ENCODE measurements at regions of chr6 and their contacts with region 1.

Region 1: GRCh38 chr6:125790358-125791150 is at the start of gene NCOA7:
- DNase-seq: peak; percentile 87 to 92 (median 89)
- ATAC-seq: peak; percentile 79 to 96 (median 93)
- H3K4me3 ChIP-seq: peak within 1 kb of the TSS; percentile 50 to 98 (median 82)
- H3K27ac ChIP-seq: peak within 1 kb of the TSS; percentile 87 to 98 (median 96)
- H3K4me1 ChIP-seq: peaks cover 0 to 52% (median 22%) of the 10 kb centered on the region in 12 donors
- H3K27me3 ChIP-seq: no peaks in the 10 kb centered on the region
- CTCF ChIP-seq: peak in 4 of 12 donors; percentile 4 to 32 (median 16)
- POLR2A ChIP-seq: peak; percentile 25 to 75
- total RNA-seq, gene NCOA7: 6.4 to 23.1 (median 9.9) TPM

Region 2: GRCh38 chr6:125835221-125835744 is 44.7 kb after region 1 on chr6:
- intact Hi-C with region 1: loop called in 3 of 10 experiments (anchors 5 kb)
- DNase-seq: peak in 1 of 5 donors; percentile 38
- ATAC-seq: peak; percentile 25 to 84 (median 78)
- H3K4me3 ChIP-seq: no peak overlapping the region
- H3K27ac ChIP-seq: peak overlapping the region in 11 of 12 donors; percentile 12 to 83 (median 66)
- H3K4me1 ChIP-seq: peaks cover 0 to 70% (median 25%) of the 10 kb centered on the region in 12 donors
- H3K27me3 ChIP-seq: no peaks in the 10 kb centered on the region
- CTCF ChIP-seq: no peak
- POLR2A ChIP-seq: no peak

Region 3: DNA sequence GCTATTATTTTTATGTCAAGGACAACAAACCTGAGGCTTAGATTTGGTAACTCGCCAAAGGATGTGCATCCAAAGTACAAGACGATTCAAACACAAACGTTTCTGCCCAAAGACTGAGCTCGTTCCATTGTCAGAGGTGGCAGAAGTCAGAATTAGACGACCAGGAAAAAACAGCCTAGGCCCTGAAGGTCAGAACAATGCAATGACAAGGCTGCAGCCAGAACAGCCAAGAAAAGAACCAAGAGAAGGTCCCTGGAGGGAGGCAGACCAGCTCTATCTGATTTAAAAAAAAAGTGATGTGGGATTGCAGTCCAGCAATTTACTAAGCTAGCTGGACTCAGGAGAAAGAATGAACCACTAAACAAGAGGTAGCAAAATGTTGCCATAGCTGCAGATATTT is 54.4 kb after region 1 on chr6:
- intact Hi-C with region 1: loop called in 7 of 10 experiments (anchors 5 to 10 kb)
- DNase-seq: peak in 4 of 5 donors; percentile 43 to 52 (median 48)
- ATAC-seq: peak; percentile 73 to 92 (median 88)
- H3K4me3 ChIP-seq: no peak overlapping the region
- H3K27ac ChIP-seq: peak overlapping the region in 11 of 12 donors; percentile 16 to 69 (median 40)
- H3K4me1 ChIP-seq: peaks cover 0 to 41% (median 25%) of the 10 kb centered on the region in 12 donors
- H3K27me3 ChIP-seq: no peaks in the 10 kb centered on the region
- CTCF ChIP-seq: no peak
- POLR2A ChIP-seq: no peak

Region 4: GRCh38 chr6:125858427-125859320 is 68.1 kb after region 1 on chr6:
- intact Hi-C with region 1: loop called in 5 of 10 experiments (anchors 5 to 10 kb)
- DNase-seq: peak in 4 of 5 donors; percentile 29 to 53 (median 38)
- ATAC-seq: peak; percentile 69 to 90 (median 86)
- H3K4me3 ChIP-seq: no peak overlapping the region
- H3K27ac ChIP-seq: no peak overlapping the region
- H3K4me1 ChIP-seq: peaks cover 0 to 10% (median 1%) of the 10 kb centered on the region in 12 donors
- H3K27me3 ChIP-seq: no peaks in the 10 kb centered on the region
- CTCF ChIP-seq: peak; percentile 44 to 81 (median 60)
- POLR2A ChIP-seq: no peak

Measured in heart left ventricle (tissue), 16 donors.